Right ventricle myocardium superior (tissue), 1 donor: ENCODE measurements at regions of chr9 and their contacts with region 1.

Region 1: GRCh38 chr9:69971643-69972449 is 71.8 kb upstream of the MAMDC2 start:
- DNase-seq: peak; percentile 86
- ATAC-seq: peak; percentile 83

Region 2: GRCh38 chr9:70111042-70111602 is 139.3 kb after region 1 on chr9:
- intact Hi-C with region 1: loop called (anchors 1 kb)
- DNase-seq: peak; percentile 91
- ATAC-seq: peak; percentile 89

Region 3: GRCh38 chr9:70229579-70229978 is 257.7 kb after region 1 on chr9:
- intact Hi-C with region 1: loop called (anchors 10 kb)
- DNase-seq: no peak
- ATAC-seq: peak; percentile 52